PC-3 (cell line): ENCODE measurements at regions of chr9 and their contacts with region 1.

Region 1: GRCh38 chr9:100170085-100170484 is 71.0 kb downstream of the INVS start:
- DNase-seq: peak; percentile 32
- ATAC-seq: peak; percentile 88
- H3K4me3 ChIP-seq: no peak overlapping the region
- H3K27ac ChIP-seq: peak overlapping the region; percentile 37; the same call in 1 of the 2 replicates
- H3K4me1 ChIP-seq: peaks cover 15% of the 10 kb centered on the region
- H3K27me3 ChIP-seq: no peaks in the 10 kb centered on the region
- CTCF ChIP-seq: no peak

Region 2: DNA sequence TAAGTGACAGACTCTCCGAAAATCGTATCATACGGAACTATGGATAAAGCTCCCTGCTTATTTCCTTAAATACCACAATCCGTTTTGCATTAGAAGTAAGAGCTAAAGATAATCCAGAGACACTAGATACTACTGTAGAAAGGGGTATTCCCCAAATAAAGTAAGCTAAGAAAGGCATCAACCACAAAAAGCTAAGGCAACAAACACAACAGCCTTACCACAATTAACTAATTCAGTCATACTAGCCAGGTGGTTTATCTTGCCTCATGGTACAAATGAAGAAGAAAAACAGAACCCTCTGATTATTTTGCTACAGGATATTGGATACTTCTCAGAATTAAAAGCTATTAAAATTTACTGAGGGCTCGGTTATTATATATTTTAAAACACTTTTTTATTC is 85.4 kb before region 1 on chr9:
- CTCF ChIA-PET with region 1: no interaction called
- POLR2A ChIA-PET with region 1: no interaction called
- intact Hi-C with region 1: no loop called
- DNase-seq: no peak
- ATAC-seq: no peak
- H3K4me3 ChIP-seq: no peak overlapping the region
- H3K27ac ChIP-seq: no peak overlapping the region
- H3K4me1 ChIP-seq: peaks cover 25% of the 10 kb centered on the region
- H3K27me3 ChIP-seq: no peaks in the 10 kb centered on the region
- CTCF ChIP-seq: no peak

Region 3: DNA sequence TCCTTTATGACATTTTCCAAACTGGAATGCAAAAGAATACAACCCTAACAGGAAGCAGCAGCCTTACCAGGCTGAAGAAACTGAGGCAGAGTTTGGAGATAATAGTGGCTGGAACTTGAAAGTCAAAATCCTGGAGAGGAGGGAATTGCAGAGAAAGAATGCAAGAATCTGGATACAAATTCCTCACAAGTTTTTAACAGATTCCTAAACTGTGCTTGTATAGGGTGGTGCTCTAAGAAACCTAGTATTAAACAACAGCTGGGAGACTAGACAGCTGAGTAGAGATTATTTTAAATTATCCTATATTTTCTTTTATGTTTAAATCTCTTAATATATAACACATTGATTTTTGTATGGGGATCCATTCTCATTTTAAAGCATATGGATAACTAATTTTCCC is 40.3 kb before region 1 on chr9:
- CTCF ChIA-PET with region 1: no interaction called
- POLR2A ChIA-PET with region 1: no interaction called
- intact Hi-C with region 1: loop called (anchors 5 kb)
- DNase-seq: no peak
- ATAC-seq: no peak
- H3K4me3 ChIP-seq: no peak overlapping the region
- H3K27ac ChIP-seq: no peak overlapping the region
- H3K4me1 ChIP-seq: no peaks in the 10 kb centered on the region
- H3K27me3 ChIP-seq: no peaks in the 10 kb centered on the region
- CTCF ChIP-seq: no peak